Right ventricle myocardium inferior (tissue), 1 donor: ENCODE measurements at regions of chr16 and their contacts with region 1.

Region 1: DNA sequence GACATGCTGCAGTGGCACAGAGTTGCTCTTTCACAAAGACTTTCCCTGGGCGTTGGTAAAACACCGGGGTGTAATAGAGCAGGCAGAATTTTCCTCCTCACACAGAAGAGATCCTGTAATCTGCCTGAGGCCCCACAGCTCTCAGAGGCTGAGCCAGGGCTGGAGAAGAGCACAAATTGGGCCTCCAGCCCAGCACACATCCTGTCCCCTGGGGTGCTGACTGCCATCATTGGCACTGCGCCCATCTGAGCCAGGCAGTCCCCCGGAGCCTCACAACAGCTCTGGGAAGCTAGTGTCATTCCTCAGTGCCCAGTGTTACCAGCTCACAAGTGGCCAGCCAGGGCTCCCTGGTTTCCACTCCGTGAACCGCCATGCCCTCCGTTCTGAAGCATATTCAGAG is 119.4 kb downstream of the SOCS1 start:
- DNase-seq: no peak
- ATAC-seq: peak; percentile 29

Region 2: DNA sequence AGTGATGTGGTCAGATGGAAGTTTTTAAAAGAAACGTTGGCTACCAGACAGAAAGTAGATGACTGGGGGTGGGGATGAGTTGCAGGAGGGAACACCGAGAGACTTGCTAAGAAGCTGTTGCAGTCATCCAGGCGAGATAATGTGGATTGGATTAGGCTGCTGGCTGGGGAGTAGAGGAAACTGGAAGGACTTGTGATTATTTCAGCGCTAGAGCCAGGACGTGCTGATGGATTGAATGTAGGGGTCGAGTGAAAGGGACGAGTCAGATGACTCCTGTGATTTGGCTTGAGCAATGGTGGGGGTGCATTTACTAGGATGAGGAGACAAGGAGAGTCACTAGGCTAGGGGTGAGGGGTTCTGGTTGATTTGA is 103.7 kb before region 1 on chr16:
- intact Hi-C with region 1: loop called (anchors 5 kb)
- DNase-seq: no peak
- ATAC-seq: peak; percentile 88

Region 3: GRCh38 chr16:11047057-11047456 is 89.5 kb before region 1 on chr16:
- intact Hi-C with region 1: no loop called
- DNase-seq: no peak
- ATAC-seq: no peak

Region 4: GRCh38 chr16:11105038-11105903 is 31.3 kb before region 1 on chr16:
- intact Hi-C with region 1: loop called (anchors 5 kb)
- DNase-seq: no peak
- ATAC-seq: peak; percentile 81

Region 5: DNA sequence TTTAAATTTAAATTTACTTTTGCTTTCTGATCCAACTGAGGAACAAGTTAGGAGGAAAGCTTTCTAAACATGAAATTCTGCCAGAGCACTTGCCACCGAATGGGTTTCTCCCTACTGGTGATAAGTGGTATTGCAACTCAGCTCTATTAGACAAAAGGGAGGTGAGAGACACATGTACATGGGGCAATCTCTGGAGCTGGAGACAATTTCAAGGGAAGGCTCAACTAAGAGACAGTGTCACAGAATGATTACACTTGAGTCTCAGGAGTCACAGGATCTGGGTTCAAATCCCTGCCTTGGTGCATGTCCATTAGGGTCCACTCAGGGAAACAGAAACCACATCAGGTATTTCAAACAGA is 82.0 kb after region 1 on chr16:
- intact Hi-C with region 1: no loop called
- DNase-seq: no peak
- ATAC-seq: no peak

Region 6: GRCh38 chr16:11560701-11561449 is 424.3 kb after region 1 on chr16:
- intact Hi-C with region 1: no loop called
- DNase-seq: no peak
- ATAC-seq: peak; percentile 37